Activated T-helper 2 cell treated with anti-CD3 and anti-CD28 coated beads, Interferon-gamma antibody, Interleukin-2, Interleukin-4, amounts not matched to agents 10 μg/mL and 5 μg/mL and 100 μg/mL, durations not matched to agents 14 hours and 24 hours and 36 hours (primary cell): ENCODE measurements at regions of chr1 and their contacts with region 1.

Region 1: GRCh38 chr1:27522432-27523351 is 32.7 kb upstream of the WASF2 start:
- DNase-seq: peak; percentile 68
- H3K4me3 Mint-ChIP-seq: peak overlapping the region; percentile 92
- H3K27ac Mint-ChIP-seq: peak overlapping the region; percentile 96
- H3K4me1 Mint-ChIP-seq: peaks cover 59% of the 10 kb centered on the region
- H3K27me3 Mint-ChIP-seq: no peaks in the 10 kb centered on the region

Region 2: GRCh38 chr1:27416387-27417111 is 106.1 kb before region 1 on chr1:
- intact Hi-C with region 1: loop called (anchors 1 kb)
- DNase-seq: peak; percentile 53
- H3K4me3 Mint-ChIP-seq: no peak overlapping the region
- H3K27ac Mint-ChIP-seq: peak overlapping the region; percentile 55
- H3K4me1 Mint-ChIP-seq: peaks cover 37% of the 10 kb centered on the region
- H3K27me3 Mint-ChIP-seq: no peaks in the 10 kb centered on the region

Region 3: DNA sequence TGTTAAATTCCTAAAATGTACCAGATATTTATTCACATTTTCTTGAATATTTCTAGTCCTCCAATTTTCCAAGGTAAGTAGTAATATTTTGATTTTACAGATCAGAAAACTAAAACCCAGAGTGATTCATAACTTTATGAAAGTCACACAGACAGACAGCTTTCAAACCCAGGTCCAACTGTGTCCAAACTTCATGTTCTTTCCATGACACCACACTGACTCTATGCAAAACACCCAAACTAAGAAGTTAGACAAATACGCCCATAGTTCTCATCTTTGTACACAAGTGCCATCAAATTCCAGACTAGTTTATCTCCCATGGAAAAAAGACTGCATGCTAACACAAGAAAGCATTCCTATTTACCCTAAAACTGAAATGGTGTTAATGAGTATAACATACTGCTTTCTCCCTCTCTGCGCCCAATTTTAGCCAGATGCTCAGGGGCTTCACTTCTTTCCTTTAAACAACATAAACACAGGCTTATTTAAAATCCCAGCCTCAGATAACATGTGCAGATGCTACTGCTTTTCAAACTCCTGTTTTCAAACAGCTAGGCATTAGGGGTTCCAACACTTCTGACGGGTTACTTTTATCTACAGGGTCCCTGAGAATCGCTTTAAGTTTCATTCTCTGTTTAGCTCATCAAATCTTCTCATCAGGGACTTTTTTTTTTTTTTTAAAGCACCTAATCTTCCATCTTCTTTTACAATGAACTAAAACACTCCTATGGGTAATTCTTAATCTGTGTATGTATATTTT is 77.3 kb before region 1 on chr1:
- intact Hi-C with region 1: loop called (anchors 1 kb)
- DNase-seq: no peak
- H3K4me3 Mint-ChIP-seq: peak overlapping the region; percentile 67
- H3K27ac Mint-ChIP-seq: peak overlapping the region; percentile 96
- H3K4me1 Mint-ChIP-seq: peaks cover 52% of the 10 kb centered on the region
- H3K27me3 Mint-ChIP-seq: no peaks in the 10 kb centered on the region

Region 4: GRCh38 chr1:27489910-27490741 is 32.6 kb before region 1 on chr1 and contains the start of gene WASF2:
- intact Hi-C with region 1: loop called (anchors 1 kb)
- DNase-seq: peak; percentile 96
- H3K4me3 Mint-ChIP-seq: peak within 1 kb of the TSS; percentile 97
- H3K27ac Mint-ChIP-seq: peak within 1 kb of the TSS; percentile 99
- H3K4me1 Mint-ChIP-seq: peaks cover 24% of the 10 kb centered on the region
- H3K27me3 Mint-ChIP-seq: no peaks in the 10 kb centered on the region
- total RNA-seq, gene WASF2: 125 and 128 TPM in 2 replicates

Region 5: GRCh38 chr1:27556781-27557595 is 34.3 kb after region 1 on chr1:
- intact Hi-C with region 1: loop called (anchors 5 kb)
- DNase-seq: peak; percentile 71
- H3K4me3 Mint-ChIP-seq: no peak overlapping the region
- H3K27ac Mint-ChIP-seq: peak overlapping the region; percentile 76
- H3K4me1 Mint-ChIP-seq: peaks cover 24% of the 10 kb centered on the region
- H3K27me3 Mint-ChIP-seq: no peaks in the 10 kb centered on the region